Motor neuron (in vitro differentiated cells): ENCODE measurements at regions of chr7 and their contacts with region 1.

Region 1: GRCh38 chr7:75866489-75867389 is 12.1 kb upstream of the RHBDD2 start:
- ATAC-seq: peak; percentile 86 to 96 (median 92)
- H3K4me3 ChIP-seq: no peak overlapping the region
- H3K27ac ChIP-seq: no peak overlapping the region
- H3K4me1 ChIP-seq: peaks cover 0 to 4% of the 10 kb centered on the region in 2 donors

Region 2: DNA sequence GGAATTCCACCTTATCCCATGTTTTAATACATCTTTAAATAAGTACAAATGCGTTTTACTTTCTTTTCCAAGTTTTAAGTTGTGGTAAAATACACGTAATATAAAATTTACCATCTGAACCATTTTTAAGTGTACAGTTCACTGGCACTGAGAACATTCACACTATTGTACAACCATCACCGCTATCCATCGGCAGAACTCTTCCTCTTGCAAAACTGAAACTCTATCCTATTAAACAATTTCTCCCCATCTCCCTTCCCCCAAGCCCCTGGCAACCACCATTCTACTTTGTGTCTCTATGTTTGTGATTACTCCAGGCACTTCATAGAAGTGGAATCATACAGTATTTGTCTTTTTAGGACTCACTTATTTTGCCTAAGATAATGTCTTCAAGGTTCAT is 161.8 kb before region 1 on chr7:
- in situ Hi-C with region 1: no loop called
- ATAC-seq: no peak
- H3K4me3 ChIP-seq: no peak overlapping the region
- H3K27ac ChIP-seq: no peak overlapping the region
- H3K4me1 ChIP-seq: no peaks in the 10 kb centered on the region

Region 3: DNA sequence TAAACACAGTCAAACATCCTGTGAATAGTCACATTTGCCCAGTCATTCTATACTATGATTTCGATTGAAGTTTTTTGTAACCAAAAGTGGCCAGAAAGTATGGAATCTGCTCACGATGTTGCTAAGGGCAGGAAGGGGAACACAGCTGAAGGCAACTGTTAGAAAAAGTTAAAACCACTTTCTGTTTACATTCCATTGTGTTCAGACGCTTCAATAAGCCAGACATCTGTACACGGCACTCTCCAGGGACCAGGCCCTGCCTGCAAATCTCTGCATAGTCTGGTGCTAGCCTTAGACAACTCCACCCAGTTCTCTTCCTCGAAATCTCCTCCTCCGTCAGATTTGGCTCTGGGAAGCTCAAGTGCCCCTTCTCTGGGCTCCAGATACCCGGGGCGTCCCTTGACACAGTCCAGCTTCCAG is 144.7 kb after region 1 on chr7:
- in situ Hi-C with region 1: loop called in 2 of 9 experiments (anchors 10 to 25 kb)
- ATAC-seq: peak in 4 of 8 experiments; percentile 25 to 99 (median 91)
- H3K4me3 ChIP-seq: no peak overlapping the region
- H3K27ac ChIP-seq: no peak overlapping the region
- H3K4me1 ChIP-seq: no peaks in the 10 kb centered on the region

Region 4: GRCh38 chr7:76020031-76020714 is 153.4 kb after region 1 on chr7:
- in situ Hi-C with region 1: loop called in 2 of 9 experiments (anchors 10 to 25 kb)
- ATAC-seq: peak; percentile 36 to 79 (median 60)
- H3K4me3 ChIP-seq: no peak overlapping the region
- H3K27ac ChIP-seq: no peak overlapping the region
- H3K4me1 ChIP-seq: no peaks in the 10 kb centered on the region

Region 5: GRCh38 chr7:76149847-76150691 is 283.3 kb after region 1 on chr7:
- in situ Hi-C with region 1: no loop called
- ATAC-seq: no peak
- H3K4me3 ChIP-seq: no peak overlapping the region
- H3K27ac ChIP-seq: no peak overlapping the region
- H3K4me1 ChIP-seq: no peaks in the 10 kb centered on the region